A673 (cell line): ENCODE measurements at regions of chr13 and their contacts with region 1.

Region 1: GRCh38 chr13:111216166-111216960 is 101.3 kb downstream of the ARHGEF7 start:
- DNase-seq: peak; percentile 27
- H3K4me3 ChIP-seq: no peak overlapping the region
- H3K27ac ChIP-seq: no peak overlapping the region
- H3K4me1 ChIP-seq: peaks cover 8% of the 10 kb centered on the region
- H3K27me3 ChIP-seq: no peaks in the 10 kb centered on the region
- CTCF ChIP-seq: peak; percentile 51

Region 2: DNA sequence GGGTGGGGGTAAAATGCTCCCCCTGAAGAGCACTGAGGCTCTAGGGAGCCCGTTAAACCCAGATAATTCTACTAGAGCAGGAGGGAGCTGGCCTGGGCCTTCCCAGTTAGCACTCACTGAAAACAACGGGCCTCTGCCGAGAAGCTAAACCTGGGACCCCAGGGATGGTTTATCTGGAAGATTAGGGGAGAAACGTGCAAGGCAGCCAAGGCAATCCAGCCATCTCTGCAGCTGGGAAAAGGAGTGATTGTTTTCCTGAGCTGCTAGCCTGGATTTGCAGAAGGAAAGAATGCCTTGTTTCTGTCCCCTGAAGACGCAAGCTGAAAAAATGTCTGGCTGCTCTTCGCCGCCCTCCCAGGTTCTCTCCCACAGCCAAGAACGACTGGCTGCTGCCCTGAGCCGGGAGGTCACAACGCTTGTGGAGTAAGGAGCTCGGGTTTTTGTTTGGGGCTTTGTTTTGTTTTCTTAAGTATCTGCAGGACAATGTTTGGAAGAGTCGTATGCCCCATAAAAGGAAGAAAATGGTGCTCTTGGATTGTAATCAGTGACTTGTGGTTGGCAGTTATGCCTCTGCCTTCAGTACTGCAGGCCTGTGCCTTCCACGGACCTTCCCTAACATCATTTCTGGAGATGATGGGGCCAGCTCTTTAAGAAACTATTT is 877.8 kb before region 1 on chr13:
- CTCF ChIA-PET with region 1: no interaction called
- POLR2A ChIA-PET with region 1: no interaction called
- intact Hi-C with region 1: no loop called
- DNase-seq: no peak
- H3K4me3 ChIP-seq: no peak overlapping the region
- H3K27ac ChIP-seq: peak overlapping the region; percentile 41
- H3K4me1 ChIP-seq: peaks cover 27% of the 10 kb centered on the region
- H3K27me3 ChIP-seq: no peaks in the 10 kb centered on the region
- CTCF ChIP-seq: no peak

Region 3: DNA sequence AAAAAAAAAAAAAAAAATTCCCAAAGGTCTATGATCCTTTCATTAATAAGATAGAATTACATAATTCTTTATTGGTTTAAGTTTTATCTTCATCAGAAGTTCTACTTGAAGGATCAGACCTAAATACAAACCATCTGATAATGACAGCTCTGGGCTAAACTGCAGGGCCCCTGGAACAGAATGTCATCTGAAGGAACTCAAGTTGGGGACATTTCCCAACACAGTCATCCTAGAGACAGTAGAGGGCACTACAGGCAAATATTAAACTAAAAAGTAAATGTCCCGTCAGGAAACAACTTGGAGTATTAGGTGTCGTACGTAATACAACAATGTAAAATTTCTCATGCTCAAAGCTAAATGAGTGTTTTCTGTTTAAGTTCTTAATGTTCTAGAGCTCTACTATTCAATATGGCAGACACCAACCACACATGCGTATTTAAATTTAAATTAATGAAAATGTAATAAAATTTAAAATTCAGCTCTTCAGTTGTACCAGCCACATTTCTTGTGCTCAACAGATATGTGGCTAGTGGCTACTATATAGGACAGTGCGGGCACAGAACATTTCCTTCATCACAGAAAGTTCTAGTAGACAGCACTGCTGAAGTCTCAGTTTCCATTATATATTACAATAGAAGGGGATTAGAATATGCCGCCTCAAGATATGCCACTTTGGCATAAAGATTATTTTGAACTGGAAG is 622.8 kb before region 1 on chr13:
- CTCF ChIA-PET with region 1: no interaction called
- POLR2A ChIA-PET with region 1: no interaction called
- intact Hi-C with region 1: loop called (anchors 5 kb)
- DNase-seq: peak; percentile 80
- H3K4me3 ChIP-seq: no peak overlapping the region
- H3K27ac ChIP-seq: no peak overlapping the region
- H3K4me1 ChIP-seq: no peaks in the 10 kb centered on the region
- H3K27me3 ChIP-seq: no peaks in the 10 kb centered on the region
- CTCF ChIP-seq: peak; percentile 78